ENCODE measurements at regions of chr17 and their contacts with region 1.

Region 1: GRCh38 chr17:44110823-44111633 is 12.4 kb downstream of the HDAC5 start:
- DNase-seq: peak; percentile 82
- ATAC-seq: peak; percentile 75
- H3K4me3 Mint-ChIP-seq: peak overlapping the region; percentile 49
- H3K27ac Mint-ChIP-seq: no peak overlapping the region
- H3K4me1 Mint-ChIP-seq: peaks cover 48% of the 10 kb centered on the region
- H3K27me3 Mint-ChIP-seq: no peaks in the 10 kb centered on the region
- CTCF ChIP-seq: no peak

Region 2: DNA sequence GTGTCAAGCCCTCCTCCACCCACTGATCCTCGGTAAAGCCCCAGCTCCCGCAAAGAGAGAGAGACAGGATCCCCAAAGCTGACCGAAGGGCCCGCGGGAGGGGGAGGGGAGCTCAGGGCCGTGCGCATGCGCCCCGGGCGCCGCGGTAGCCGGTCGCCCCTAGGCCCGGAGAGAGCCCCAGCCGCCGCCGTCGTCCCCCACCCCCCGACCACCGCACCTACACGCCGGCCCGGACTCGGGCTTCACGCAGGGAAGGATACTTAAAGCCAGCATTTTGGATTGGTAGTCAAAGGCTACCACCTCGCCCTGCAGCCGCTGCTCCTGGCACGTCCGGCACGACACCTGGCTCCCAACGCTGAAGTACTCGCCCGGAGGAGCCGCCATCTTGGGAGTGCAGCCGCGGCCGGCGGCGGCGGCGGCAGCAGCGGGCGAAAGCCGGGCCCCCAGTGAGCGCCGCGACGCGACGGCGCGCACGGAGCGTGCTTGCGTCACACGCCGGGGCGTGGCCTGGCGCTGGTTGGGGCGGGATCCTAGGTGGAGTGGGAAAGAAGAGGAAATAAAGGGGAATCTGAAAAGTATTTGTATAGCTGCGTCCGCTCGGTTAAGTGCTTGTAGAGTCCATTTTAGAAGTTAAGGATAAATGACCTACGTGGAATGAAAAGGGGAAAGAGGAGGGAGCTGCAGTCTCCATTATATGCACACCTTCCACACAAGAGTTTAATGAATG is 44.7 kb before region 1 on chr17 and contains the start of gene LSM12:
- CTCF ChIA-PET with region 1: interaction called, 11 read pairs
- POLR2A ChIA-PET with region 1: interaction called, 8 read pairs
- DNase-seq: peak; percentile 93
- ATAC-seq: peak; percentile 57
- H3K4me3 Mint-ChIP-seq: peak within 1 kb of the TSS; percentile 96
- H3K27ac Mint-ChIP-seq: peak within 1 kb of the TSS; percentile 99
- H3K4me1 Mint-ChIP-seq: peaks cover 40% of the 10 kb centered on the region
- H3K27me3 Mint-ChIP-seq: no peaks in the 10 kb centered on the region
- CTCF ChIP-seq: no peak
- total RNA-seq, gene LSM12: 96.8 to 102 TPM (median 98.0 TPM) in 3 replicates

Region 3: GRCh38 chr17:44086364-44087311 is 24.4 kb before region 1 on chr17:
- CTCF ChIA-PET with region 1: interaction called, 41 read pairs
- POLR2A ChIA-PET with region 1: interaction called, 5 read pairs
- DNase-seq: no peak
- ATAC-seq: peak; percentile 35
- H3K4me3 Mint-ChIP-seq: peak overlapping the region; percentile 55
- H3K27ac Mint-ChIP-seq: peak overlapping the region; percentile 97
- H3K4me1 Mint-ChIP-seq: peaks cover 27% of the 10 kb centered on the region
- H3K27me3 Mint-ChIP-seq: no peaks in the 10 kb centered on the region
- CTCF ChIP-seq: no peak

Region 4: GRCh38 chr17:44095642-44096496 is 15.2 kb before region 1 on chr17:
- CTCF ChIA-PET with region 1: interaction called, 116 read pairs
- POLR2A ChIA-PET with region 1: interaction called, 5 read pairs
- DNase-seq: peak; percentile 85
- ATAC-seq: peak; percentile 86
- H3K4me3 Mint-ChIP-seq: peak overlapping the region; percentile 73
- H3K27ac Mint-ChIP-seq: peak overlapping the region; percentile 99
- H3K4me1 Mint-ChIP-seq: peaks cover 36% of the 10 kb centered on the region
- H3K27me3 Mint-ChIP-seq: no peaks in the 10 kb centered on the region
- CTCF ChIP-seq: no peak

Region 5: GRCh38 chr17:44141717-44142285 is 30.8 kb after region 1 on chr17 and contains the start of gene HROB:
- CTCF ChIA-PET with region 1: interaction called, 29 read pairs
- POLR2A ChIA-PET with region 1: no interaction called
- DNase-seq: peak; percentile 100
- ATAC-seq: peak; percentile 84
- H3K4me3 Mint-ChIP-seq: peak within 1 kb of the TSS; percentile 96
- H3K27ac Mint-ChIP-seq: peak within 1 kb of the TSS; percentile 96
- H3K4me1 Mint-ChIP-seq: peaks cover 25% of the 10 kb centered on the region
- H3K27me3 Mint-ChIP-seq: no peaks in the 10 kb centered on the region; the same call in 1 of the 2 replicates
- CTCF ChIP-seq: peak; percentile 68
- total RNA-seq, gene HROB: 22.4 to 23.9 TPM (median 23.7 TPM) in 3 replicates

Region 6: GRCh38 chr17:44191941-44192496 is 81.0 kb after region 1 on chr17:
- CTCF ChIA-PET with region 1: no interaction called
- POLR2A ChIA-PET with region 1: no interaction called
- DNase-seq: peak; percentile 53
- ATAC-seq: peak; percentile 88
- H3K4me3 Mint-ChIP-seq: peak overlapping the region; percentile 27; the same call in 1 of the 2 replicates
- H3K27ac Mint-ChIP-seq: peak overlapping the region; percentile 77
- H3K4me1 Mint-ChIP-seq: peaks cover 26% of the 10 kb centered on the region
- H3K27me3 Mint-ChIP-seq: no peaks in the 10 kb centered on the region
- CTCF ChIP-seq: no peak